Stomach (tissue), 19 donors: ENCODE measurements at regions of chr12 and their contacts with region 1.

Region 1: GRCh38 chr12:120228291-120229070 is 27.6 kb upstream of the RPLP0 start:
- DNase-seq: peak; percentile 90 to 96
- H3K4me3 ChIP-seq: peak overlapping the region in 3 of 4 donors; percentile 12 to 28 (median 26)
- H3K27ac ChIP-seq: peak overlapping the region; percentile 32 to 92 (median 88)
- H3K4me1 ChIP-seq: peaks cover 96 to 100% (median 97%) of the 10 kb centered on the region in 4 donors
- H3K27me3 ChIP-seq: no peaks in the 10 kb centered on the region
- CTCF ChIP-seq: peak in 6 of 7 experiments; percentile 56 to 99 (median 90)
- EP300 ChIP-seq: no peak
- POLR2A ChIP-seq: no peak

Region 2: DNA sequence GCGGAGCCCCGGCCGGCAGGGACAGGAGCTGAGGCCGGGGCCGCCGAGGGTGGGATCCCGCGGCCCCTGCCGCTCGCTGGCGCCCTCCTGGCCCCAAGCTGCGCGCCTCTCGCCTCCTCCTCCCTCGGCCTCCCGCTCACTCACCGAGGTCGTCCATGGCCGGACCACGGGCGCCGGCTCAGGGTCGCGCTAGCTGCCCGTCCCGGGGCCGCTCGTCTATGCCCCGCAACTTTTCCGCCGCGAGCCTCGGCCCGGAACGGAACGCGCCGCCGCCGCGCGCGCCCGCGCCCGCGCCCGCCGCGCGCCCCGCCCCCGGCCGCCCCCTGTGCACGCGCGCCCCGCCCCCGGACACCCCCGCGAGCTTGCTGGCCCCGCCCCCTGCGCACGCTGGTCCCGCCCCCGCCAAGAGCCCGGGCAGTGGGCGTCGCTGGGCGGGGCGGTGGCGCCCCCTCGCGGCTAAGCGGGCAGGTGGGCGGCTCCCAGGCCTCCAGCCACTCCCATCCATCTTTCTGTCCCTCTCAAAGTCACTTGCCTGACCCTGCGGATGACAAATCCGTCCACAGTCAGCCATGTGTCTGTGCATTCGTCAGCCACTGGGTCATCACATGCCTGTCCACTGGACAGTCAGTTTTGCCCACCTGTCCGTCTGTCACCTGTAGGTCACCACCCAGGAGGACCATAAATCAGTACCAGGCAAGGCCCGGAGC is 37.1 kb after region 1 on chr12 and contains the start of gene PXN:
- intact Hi-C with region 1: loop called (anchors 2 kb)
- DNase-seq: peak; percentile 93 to 96
- H3K4me3 ChIP-seq: peak within 1 kb of the TSS; percentile 85 to 99 (median 98)
- H3K27ac ChIP-seq: peak within 1 kb of the TSS; percentile 92 to 96 (median 94)
- H3K4me1 ChIP-seq: peaks cover 32 to 56% (median 51%) of the 10 kb centered on the region in 4 donors
- H3K27me3 ChIP-seq: no peaks in the 10 kb centered on the region
- CTCF ChIP-seq: peak in 5 of 7 experiments; percentile 70 to 92 (median 77)
- EP300 ChIP-seq: no peak
- POLR2A ChIP-seq: no peak
- total RNA-seq, gene PXN: 39.7 to 129 (median 58.9) TPM

Region 3: DNA sequence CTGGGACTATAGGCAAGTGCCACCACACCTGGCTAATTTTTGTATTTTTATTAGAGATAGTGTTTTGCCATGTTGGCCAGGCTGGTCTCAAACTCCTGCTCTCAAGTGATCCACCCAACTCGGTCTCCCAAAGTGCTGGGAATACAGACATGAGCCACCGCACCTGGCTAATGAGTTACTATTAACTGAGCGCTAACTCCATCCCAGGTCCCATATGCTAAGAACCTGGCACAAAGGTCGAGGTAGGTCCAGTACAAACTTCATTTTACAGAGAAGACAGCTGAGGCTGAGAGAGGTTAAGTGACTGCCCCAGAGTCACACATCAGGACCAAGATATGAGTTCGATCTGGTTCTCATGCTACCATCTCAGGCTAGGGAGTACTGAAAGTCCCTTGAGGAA is 103.6 kb after region 1 on chr12:
- intact Hi-C with region 1: no loop called
- DNase-seq: no peak
- H3K4me3 ChIP-seq: no peak overlapping the region
- H3K27ac ChIP-seq: no peak overlapping the region
- H3K4me1 ChIP-seq: peaks cover 0 to 15% (median 2%) of the 10 kb centered on the region in 4 donors
- H3K27me3 ChIP-seq: no peaks in the 10 kb centered on the region
- CTCF ChIP-seq: no peak
- EP300 ChIP-seq: no peak
- POLR2A ChIP-seq: no peak